ENCODE measurements at regions of chr15 and their contacts with region 1.

Region 1: DNA sequence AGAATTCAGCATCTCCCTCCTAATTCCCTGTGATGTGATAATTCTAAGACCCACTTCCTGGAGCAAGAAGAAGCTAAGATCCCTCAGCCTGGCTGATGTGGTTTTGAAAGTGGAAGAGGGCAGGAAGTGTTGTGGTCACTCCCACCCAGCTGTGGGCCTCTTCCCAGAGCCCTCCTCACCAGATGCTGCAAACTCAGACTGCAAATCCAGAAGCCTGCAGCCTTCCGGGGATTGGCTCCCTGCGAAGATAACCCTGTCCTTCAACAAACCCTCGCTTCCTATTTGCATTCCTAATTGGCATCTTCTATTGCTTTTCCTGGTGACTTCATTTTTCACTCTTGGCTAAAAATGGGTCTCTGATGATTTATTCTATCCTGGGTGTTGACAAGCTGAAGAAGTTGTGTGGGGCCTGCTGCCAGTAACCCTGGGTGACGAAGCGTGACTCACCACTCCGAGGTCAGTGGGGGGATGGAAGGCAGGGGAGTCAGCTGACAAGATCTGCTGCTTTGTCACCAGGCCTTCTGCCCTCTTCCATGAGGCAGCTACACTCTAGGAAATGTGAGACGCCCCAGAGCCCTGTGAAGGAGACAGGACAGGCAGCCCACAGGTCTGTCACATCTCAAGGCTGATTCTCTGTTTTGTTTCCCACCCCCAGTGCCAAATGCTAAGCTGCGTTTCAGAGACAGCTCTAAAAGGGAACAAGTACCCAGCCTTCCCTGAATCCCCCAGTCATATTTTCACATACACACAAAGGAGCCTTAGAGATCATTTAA is 99.7 kb upstream of the LIPC start:
- DNase-seq: peak; percentile 76
- H3K4me3 Mint-ChIP-seq: peak overlapping the region; percentile 32
- H3K27ac Mint-ChIP-seq: peak overlapping the region; percentile 96
- H3K4me1 Mint-ChIP-seq: peaks cover 43% of the 10 kb centered on the region
- H3K27me3 Mint-ChIP-seq: no peaks in the 10 kb centered on the region

Region 2: DNA sequence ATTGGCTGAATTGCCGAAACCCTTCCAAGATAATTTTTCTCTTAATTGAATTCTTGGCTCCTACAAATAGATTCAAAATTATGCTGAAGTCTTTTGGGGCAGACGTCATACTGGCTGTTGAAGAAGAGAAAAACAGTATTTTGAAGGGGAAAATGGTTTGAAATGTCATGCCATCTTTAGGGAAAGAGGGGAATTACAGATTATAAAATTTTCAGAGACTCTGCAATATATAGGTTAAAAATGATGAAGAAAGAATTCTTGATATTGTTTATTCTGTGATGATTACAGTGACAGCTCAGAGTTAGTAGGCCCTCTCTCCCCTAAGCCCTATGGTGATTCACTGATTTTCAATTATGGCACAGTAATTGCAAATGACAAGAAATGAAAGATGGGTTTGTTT is 869.7 kb before region 1 on chr15:
- intact Hi-C with region 1: no loop called
- DNase-seq: no peak
- H3K4me3 Mint-ChIP-seq: no peak overlapping the region
- H3K27ac Mint-ChIP-seq: no peak overlapping the region
- H3K4me1 Mint-ChIP-seq: no peaks in the 10 kb centered on the region
- H3K27me3 Mint-ChIP-seq: peaks cover 7% of the 10 kb centered on the region

Region 3: GRCh38 chr15:57878573-57878972 is 453.5 kb before region 1 on chr15:
- intact Hi-C with region 1: no loop called
- DNase-seq: no peak
- H3K4me3 Mint-ChIP-seq: no peak overlapping the region
- H3K27ac Mint-ChIP-seq: no peak overlapping the region
- H3K4me1 Mint-ChIP-seq: peaks cover 4% of the 10 kb centered on the region
- H3K27me3 Mint-ChIP-seq: peaks cover 28% of the 10 kb centered on the region

Region 4: DNA sequence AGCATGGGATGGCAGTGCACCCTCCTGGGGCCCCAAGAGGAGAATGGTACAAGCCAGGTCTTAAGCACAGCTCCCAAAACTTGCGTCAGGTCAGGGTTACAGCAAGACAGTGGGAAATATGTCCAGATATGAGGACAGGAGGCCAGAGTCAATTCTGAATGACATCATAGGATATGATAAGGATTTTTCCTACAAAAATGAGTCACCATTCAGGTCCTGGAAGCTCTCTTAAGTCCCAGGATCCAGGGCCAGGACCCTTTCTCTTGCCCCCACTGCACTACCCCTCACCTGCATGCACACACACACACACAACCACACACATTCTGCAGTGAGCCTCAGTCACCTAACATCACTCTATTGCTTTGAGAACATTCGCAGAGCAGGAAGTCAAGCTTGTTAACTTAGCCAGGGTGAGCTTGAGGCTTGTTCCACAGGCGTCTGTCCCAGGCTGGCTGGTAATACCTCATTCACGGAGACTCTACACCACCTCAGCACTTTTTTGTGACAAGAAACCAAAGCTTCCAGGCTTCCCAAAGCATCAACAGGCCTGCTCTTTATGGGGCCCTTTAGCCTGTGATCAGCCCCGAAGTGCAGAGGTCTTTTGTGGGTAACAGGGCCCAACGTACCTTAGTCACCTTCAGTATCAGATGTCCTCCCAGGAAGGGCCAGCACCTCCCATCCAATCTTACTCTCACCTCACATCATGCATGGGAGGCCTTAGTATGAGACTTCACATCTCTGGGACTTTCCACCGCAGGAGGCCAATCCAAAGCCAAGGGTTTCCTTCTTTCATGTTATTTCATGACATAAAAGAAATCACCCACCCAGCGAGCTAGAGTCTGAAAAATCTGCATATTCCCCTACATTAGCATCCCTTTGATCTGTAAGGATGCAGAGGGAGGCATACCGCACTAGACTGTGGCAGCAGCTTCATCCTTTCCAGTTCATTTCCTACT is 25.7 kb after region 1 on chr15:
- intact Hi-C with region 1: loop called (anchors 2 kb)
- DNase-seq: no peak
- H3K4me3 Mint-ChIP-seq: no peak overlapping the region
- H3K27ac Mint-ChIP-seq: peak overlapping the region; percentile 19
- H3K4me1 Mint-ChIP-seq: peaks cover 18% of the 10 kb centered on the region
- H3K27me3 Mint-ChIP-seq: no peaks in the 10 kb centered on the region

Measured in activated T-helper 2 cell treated with anti-CD3 and anti-CD28 coated beads, Interferon-gamma antibody, Interleukin-2, Interleukin-4, amounts not matched to agents 10 μg/mL and 5 μg/mL and 100 μg/mL, durations not matched to agents 14 hours and 24 hours and 36 hours (primary cell).